ENCODE measurements at regions of chr4 and their contacts with region 1.

Region 1: DNA sequence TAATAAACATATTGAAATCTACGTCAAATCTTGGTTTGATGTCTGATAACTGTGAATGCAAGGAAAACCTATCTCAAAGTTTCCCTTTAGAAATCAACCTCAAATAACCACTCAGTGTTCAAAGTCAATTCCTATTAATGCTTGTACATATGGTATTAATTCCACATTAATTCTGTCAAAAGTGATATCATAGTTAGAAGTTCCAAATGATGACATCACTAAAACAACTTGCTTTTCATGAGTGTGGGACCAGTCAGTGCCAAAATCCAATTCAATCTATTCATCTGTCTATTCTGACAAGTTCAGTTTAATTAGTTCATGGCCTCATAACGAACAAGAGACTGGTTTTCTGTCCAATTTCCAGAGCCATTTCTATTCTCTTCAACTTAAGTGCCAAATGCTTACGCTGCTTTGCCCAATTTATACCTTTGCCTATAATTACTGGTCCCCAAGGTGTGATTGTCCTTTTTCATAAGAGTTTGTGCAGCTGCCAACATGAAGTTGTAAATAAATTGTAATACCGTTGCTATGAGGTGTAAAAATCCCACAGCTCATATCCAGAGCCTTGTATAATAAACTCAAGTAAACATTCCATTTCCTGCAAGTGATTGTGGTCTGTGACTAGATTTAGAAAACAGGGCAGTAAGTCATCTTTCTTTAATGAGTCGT is 476.2 kb downstream of the RAB28 start:
- DNase-seq: no peak
- H3K4me3 ChIP-seq: no peak overlapping the region
- H3K27ac ChIP-seq: no peak overlapping the region
- H3K4me1 ChIP-seq: no peaks in the 10 kb centered on the region
- H3K27me3 ChIP-seq: no peaks in the 10 kb centered on the region
- CTCF ChIP-seq: no peak

Region 2: DNA sequence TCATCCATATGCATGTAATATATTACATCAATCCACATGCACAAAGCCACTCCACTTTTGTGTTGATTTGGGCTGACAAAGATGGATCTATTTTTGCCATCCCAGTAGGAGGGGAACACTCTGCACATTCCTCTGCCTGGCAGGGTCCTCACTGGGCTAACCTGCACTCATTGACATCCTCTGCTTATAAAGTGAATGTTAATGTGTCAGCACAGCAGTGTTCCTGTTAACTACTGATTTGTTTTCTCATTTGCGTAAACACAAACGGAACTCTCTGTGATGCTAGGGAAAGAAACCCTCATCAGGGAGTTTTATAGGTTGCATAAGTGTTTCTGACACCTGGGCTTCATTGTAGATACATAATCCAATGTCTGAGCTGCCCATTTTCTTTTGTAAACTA is 349.8 kb before region 1 on chr4:
- CTCF ChIA-PET with region 1: no interaction called
- dilution Hi-C with region 1: no loop called
- in situ Hi-C with region 1: no loop called
- intact Hi-C with region 1: no loop called
- DNase-seq: no peak
- H3K4me3 ChIP-seq: no peak overlapping the region
- H3K27ac ChIP-seq: no peak overlapping the region
- H3K4me1 ChIP-seq: no peaks in the 10 kb centered on the region
- H3K27me3 ChIP-seq: no peaks in the 10 kb centered on the region
- CTCF ChIP-seq: no peak

Region 3: DNA sequence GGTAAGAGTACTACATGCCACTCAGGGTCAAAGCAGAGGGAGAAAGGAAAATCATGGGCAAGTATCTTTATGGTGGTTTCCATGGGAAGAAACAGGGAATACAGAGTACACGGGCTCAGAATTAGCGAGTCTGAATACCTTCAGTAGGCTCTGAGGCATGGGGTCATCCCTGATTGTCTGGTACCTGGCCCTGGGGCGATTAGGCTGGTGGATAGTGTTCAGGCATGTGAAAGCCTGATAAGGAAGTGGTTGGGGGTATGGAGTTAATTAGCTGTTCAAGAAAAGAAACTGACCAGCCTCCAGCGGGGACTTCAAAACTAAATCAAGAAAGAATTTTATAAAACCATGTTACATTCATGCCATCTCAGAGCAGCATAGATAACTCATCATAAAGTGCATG is 42.6 kb before region 1 on chr4:
- CTCF ChIA-PET with region 1: no interaction called
- dilution Hi-C with region 1: no loop called
- in situ Hi-C with region 1: no loop called
- intact Hi-C with region 1: loop called (anchors 1 kb)
- DNase-seq: no peak
- H3K4me3 ChIP-seq: no peak overlapping the region
- H3K27ac ChIP-seq: no peak overlapping the region
- H3K4me1 ChIP-seq: no peaks in the 10 kb centered on the region
- H3K27me3 ChIP-seq: no peaks in the 10 kb centered on the region
- CTCF ChIP-seq: no peak

Measured in mammary epithelial cell (primary cell).